Motor neuron (in vitro differentiated cells): ENCODE measurements at regions of chr1 and their contacts with region 1.

Region 1: GRCh38 chr1:36553591-36554322 is 71.0 kb upstream of the CSF3R start:
- ATAC-seq: peak; percentile 81 to 99 (median 92)
- H3K4me3 ChIP-seq: no peak overlapping the region
- H3K27ac ChIP-seq: no peak overlapping the region
- H3K4me1 ChIP-seq: peaks cover 4 to 8% of the 10 kb centered on the region in 2 donors

Region 2: DNA sequence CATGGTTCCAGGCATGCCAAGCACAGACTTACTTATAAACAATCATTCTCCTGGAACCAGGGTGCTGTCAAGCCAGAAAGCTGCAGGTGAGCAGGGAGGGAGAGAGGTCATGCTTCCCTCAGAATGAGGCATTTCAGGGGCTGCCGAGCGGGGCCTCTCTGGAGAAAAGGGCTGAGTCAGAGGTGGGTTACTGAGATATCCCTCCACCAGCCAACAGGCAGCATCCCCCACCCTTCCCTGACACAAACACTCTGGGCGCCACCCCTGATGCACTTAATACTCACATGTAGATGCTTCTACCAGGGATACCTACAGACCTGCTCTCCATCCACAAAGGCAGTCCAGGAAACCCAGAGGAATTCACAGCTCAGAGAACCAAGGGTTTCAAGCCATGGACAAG is 181.1 kb before region 1 on chr1:
- in situ Hi-C with region 1: no loop called
- ATAC-seq: peak in 4 of 8 experiments; percentile 1 to 7 (median 2)
- H3K4me3 ChIP-seq: no peak overlapping the region
- H3K27ac ChIP-seq: peak overlapping the region; percentile 91 to 92
- H3K4me1 ChIP-seq: peaks cover 40 to 46% of the 10 kb centered on the region in 2 donors

Region 3: GRCh38 chr1:36737767-36738166 is 184.0 kb after region 1 on chr1:
- in situ Hi-C with region 1: no loop called
- ATAC-seq: peak in 2 of 8 experiments; percentile 21 to 32
- H3K4me3 ChIP-seq: no peak overlapping the region
- H3K27ac ChIP-seq: no peak overlapping the region
- H3K4me1 ChIP-seq: peaks cover 6 to 12% of the 10 kb centered on the region in 2 donors

Region 4: GRCh38 chr1:37323486-37324377 is 770.0 kb after region 1 on chr1:
- in situ Hi-C with region 1: loop called in 1 of 9 experiments (anchors 25 kb)
- ATAC-seq: no peak
- H3K4me3 ChIP-seq: no peak overlapping the region
- H3K27ac ChIP-seq: no peak overlapping the region
- H3K4me1 ChIP-seq: peaks cover 8 to 15% of the 10 kb centered on the region in 2 donors

Region 5: DNA sequence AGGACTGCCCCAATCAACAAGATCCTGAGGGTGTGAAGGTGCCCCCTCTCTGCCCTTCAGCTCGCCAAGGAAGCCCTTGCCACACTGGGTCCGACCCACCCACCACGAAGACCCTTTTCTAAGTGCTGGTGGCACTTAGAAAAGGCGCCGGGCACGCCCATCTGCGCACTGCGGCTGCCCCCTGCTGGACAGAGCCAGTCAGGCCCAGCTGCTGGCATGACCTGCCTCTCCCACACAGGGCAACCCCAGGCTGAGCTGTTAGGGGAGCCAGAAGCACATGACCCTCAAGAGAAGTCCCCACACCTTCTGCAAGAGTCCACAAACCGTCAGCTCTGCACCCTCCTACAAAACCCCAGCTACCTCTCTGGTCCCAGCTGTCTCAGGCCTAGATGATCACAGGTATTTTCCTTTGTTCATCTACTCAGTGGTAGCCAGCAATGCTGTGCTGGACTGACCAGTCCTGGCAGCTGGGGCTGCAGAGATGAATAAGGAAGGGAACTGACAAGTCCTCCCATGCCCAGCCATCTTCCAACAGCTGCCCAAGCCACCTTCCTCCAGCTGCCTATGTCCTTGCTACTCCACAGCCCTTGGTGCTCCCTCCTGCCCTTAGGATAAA is 880.6 kb after region 1 on chr1:
- in situ Hi-C with region 1: loop called in 4 of 9 experiments (anchors 25 kb)
- ATAC-seq: peak; percentile 71 to 95 (median 78)
- H3K4me3 ChIP-seq: no peak overlapping the region
- H3K27ac ChIP-seq: no peak overlapping the region
- H3K4me1 ChIP-seq: peaks cover 34 to 39% of the 10 kb centered on the region in 2 donors